Sigmoid colon (tissue), 7 donors: ENCODE measurements at regions of chr16 and their contacts with region 1.

Region 1: DNA sequence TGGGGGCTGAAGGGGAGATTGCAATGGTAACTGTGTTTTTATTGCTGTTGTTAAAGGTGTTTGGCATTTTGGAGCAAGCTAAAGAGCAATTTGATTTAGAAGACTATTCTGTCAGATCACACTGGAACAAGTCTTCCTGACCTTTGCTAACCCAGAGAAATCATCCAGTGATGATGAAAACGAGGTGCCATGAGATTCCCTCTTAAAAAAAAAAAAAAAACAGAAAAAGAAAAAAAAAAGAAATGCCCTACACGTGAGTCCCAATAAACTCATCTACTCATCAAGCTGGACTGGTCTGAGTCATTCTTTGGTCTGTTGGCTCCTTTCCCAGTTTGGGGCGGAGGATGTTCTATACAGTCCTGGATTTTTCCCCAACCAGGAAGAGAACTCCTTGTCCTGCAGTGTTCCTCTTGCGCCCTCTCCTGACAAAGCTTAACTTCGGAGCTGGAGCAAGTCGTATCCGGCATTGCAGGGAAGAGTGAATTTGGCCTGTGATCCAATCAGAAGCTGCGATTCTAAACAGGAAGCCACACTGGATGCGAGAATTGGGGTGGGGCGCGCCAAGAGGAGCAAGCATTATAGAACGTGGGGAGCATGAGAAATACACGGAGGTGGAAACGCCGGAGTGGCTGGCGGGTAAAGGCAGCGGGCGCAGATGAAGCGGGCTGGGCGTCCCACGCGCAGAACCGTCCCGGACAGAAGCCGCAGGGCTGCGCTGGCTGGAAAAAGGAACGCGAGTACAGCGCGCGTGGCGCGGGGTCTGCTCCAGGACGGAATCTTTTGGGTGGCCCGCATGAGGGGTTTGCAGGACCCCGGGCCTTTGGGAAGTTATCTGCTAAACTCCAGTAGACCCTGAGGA is 22.4 kb upstream of the CRYM start:
- DNase-seq: peak; percentile 98
- H3K4me3 ChIP-seq: peak overlapping the region; percentile 50 to 67 (median 63)
- H3K27ac ChIP-seq: peak overlapping the region; percentile 81 to 89 (median 86)
- H3K4me1 ChIP-seq: peaks cover 0 to 20% (median 11%) of the 10 kb centered on the region in 4 donors
- H3K27me3 ChIP-seq: no peaks in the 10 kb centered on the region
- CTCF ChIP-seq: peak; percentile 64 to 91 (median 82)
- EP300 ChIP-seq: peak in 1 of 4 donors; percentile 34
- POLR2A ChIP-seq: no peak

Region 2: DNA sequence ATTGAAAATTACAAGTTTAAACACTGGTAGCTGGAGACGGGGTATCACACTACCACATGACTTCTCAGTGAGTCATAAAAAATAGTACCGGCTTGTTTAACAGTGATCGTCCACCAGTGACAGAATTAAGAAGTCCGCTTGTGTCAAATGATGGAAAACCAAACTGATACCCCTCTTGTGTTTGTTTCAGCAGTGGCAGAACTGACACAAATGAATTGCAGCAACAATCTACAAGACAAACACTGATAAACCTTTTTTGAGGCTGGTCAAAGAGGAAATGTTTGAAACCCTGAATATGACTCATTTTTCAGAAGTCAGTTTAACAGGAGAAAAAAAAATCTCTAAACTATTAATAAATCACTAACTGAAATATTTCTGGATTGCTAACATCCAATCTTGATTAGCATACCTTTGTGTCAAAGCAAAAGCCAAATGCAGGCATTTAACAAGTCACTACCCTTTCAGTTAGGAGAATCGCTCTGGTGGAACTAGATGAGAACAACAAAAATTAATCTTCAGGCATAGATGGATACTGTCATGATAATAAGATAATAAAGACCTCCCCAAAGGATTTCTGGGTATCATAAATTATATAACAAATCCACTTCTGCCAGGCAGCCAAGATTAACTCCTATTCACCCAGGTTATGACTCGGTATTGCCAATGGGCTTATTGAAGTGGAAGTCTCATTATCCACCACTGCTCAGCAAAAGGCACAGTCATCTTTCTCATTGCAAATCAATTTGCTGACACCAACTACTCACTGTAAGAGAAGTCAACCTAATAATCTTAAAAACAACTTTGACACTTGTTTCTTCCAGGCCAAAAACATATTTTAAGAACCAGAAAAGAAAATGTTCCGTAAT is 421.1 kb before region 1 on chr16:
- intact Hi-C with region 1: no loop called
- DNase-seq: no peak
- H3K4me3 ChIP-seq: no peak overlapping the region
- H3K27ac ChIP-seq: peak overlapping the region; percentile 62 to 72 (median 64)
- H3K4me1 ChIP-seq: peaks cover 0 to 82% (median 69%) of the 10 kb centered on the region in 4 donors
- H3K27me3 ChIP-seq: no peaks in the 10 kb centered on the region
- CTCF ChIP-seq: no peak
- EP300 ChIP-seq: no peak
- POLR2A ChIP-seq: no peak

Region 3: GRCh38 chr16:21158208-21159110 is 142.1 kb before region 1 on chr16 and contains the start of gene LDAF1:
- intact Hi-C with region 1: loop called (anchors 1 kb)
- DNase-seq: peak; percentile 93
- H3K4me3 ChIP-seq: peak within 1 kb of the TSS; percentile 56 to 79 (median 59)
- H3K27ac ChIP-seq: peak within 1 kb of the TSS; percentile 85 to 93 (median 89)
- H3K4me1 ChIP-seq: peaks cover 0 to 54% (median 52%) of the 10 kb centered on the region in 4 donors
- H3K27me3 ChIP-seq: no peaks in the 10 kb centered on the region
- CTCF ChIP-seq: no peak
- EP300 ChIP-seq: no peak
- POLR2A ChIP-seq: peak; percentile 61
- total RNA-seq, gene LDAF1: 111 to 158 (median 123) TPM

Region 4: GRCh38 chr16:21190599-21190998 is 109.9 kb before region 1 on chr16:
- intact Hi-C with region 1: loop called (anchors 2 kb)
- DNase-seq: no peak
- H3K4me3 ChIP-seq: no peak overlapping the region
- H3K27ac ChIP-seq: no peak overlapping the region
- H3K4me1 ChIP-seq: peaks cover 0 to 5% (median 4%) of the 10 kb centered on the region in 4 donors
- H3K27me3 ChIP-seq: peaks cover 0 to under 1% (median 0%) of the 10 kb centered on the region in 3 donors
- CTCF ChIP-seq: no peak
- EP300 ChIP-seq: no peak
- POLR2A ChIP-seq: no peak

Region 5: DNA sequence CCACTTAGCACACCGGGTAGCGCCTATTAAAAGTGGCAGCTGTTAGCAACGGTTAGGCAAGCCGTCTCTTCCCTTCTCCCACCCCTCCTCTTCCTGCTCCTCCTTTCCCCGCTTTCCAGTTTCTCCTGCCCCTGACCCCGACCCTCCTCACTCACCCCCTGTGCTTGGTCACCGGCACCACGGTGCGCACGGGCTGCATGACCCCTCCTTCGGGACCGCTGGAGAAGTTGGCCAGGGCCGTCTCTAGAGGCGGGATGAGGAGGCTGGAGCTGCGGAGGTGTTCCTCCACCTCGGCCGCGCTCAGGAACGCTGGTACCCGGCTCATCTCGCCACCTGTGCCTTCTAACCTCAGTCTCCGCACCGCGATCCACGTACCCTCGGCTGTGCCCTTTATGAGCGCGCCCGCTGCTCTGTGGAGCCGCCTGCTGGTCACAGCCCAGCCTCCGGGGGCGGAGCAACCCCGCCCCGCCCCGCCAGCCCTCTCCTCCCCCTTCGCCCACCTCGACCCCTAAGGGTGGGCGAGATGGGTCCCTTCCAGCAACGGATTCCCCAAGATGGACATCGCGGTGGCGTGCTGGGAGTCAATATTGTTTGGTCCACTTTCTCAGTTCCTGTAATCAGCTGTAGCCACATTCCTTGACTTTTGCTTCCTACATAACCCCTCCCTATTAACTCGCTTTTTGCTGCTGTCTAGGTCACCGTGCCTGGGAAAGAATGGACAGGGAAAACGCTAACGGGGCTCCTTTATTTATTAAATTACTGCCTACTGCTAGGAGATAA is 22.4 kb before region 1 on chr16 and contains the start of gene CRYM:
- intact Hi-C with region 1: loop called (anchors 2 kb)
- DNase-seq: peak; percentile 79
- H3K4me3 ChIP-seq: peak within 1 kb of the TSS; percentile 19 to 53 (median 44)
- H3K27ac ChIP-seq: peak within 1 kb of the TSS in 3 of 4 donors; percentile 36 to 50 (median 36)
- H3K4me1 ChIP-seq: peaks cover 0 to 11% (median 8%) of the 10 kb centered on the region in 4 donors
- H3K27me3 ChIP-seq: peaks cover 0 to 25% (median 0%) of the 10 kb centered on the region in 3 donors
- CTCF ChIP-seq: peak; percentile 52 to 96 (median 70)
- EP300 ChIP-seq: no peak
- POLR2A ChIP-seq: no peak
- total RNA-seq, gene CRYM: 1.6 to 6.1 (median 4.6) TPM

Region 6: GRCh38 chr16:21338537-21339268 is 38.2 kb after region 1 on chr16:
- intact Hi-C with region 1: no loop called
- DNase-seq: no peak
- H3K4me3 ChIP-seq: no peak overlapping the region
- H3K27ac ChIP-seq: no peak overlapping the region
- H3K4me1 ChIP-seq: no peaks in the 10 kb centered on the region
- H3K27me3 ChIP-seq: no peaks in the 10 kb centered on the region
- CTCF ChIP-seq: no peak
- EP300 ChIP-seq: no peak
- POLR2A ChIP-seq: no peak

Region 7: DNA sequence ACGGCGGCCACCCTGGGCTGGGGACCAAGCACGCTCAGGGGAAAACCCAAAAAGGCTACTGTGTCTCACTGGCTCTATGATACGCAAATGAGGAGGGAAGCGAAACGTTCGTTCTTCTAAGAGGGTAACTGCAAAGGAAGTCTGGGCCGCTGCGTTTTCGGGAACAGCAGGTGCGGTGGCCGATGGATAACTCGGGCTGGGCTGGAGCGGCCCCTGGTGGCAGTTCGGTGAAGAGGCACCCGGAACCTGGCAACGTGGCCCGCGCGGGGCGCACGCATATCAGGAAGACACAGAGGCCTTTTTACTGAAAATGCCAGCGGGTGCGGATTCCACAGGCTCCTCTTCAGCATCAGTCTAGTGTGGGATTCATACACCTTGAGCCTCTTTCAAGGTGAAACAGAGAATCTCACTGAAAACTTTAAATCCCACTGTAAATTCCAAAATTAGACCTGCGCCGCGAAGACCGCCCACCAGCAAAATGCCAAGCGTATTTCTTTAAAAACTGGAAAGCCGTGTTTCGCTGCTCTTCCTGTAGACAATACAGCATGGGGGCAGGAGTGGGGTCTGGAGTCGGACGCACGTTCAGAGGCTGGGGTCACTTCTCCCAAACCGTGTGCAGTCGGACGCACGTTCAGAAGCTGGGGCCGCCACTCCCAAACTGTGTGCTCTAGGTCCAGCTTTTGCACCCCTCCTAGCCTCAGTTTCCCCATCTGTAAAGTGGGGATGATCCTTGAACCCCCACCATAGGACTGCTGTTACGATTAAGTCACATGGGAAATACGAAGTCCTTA is 254.5 kb after region 1 on chr16:
- intact Hi-C with region 1: loop called (anchors 10 kb)
- DNase-seq: peak; percentile 95
- H3K4me3 ChIP-seq: peak overlapping the region in 1 of 4 donors; percentile 21
- H3K27ac ChIP-seq: no peak overlapping the region
- H3K4me1 ChIP-seq: peaks cover 0 to 12% (median 10%) of the 10 kb centered on the region in 4 donors
- H3K27me3 ChIP-seq: peaks cover 0 to 9% (median 0%) of the 10 kb centered on the region in 3 donors
- CTCF ChIP-seq: peak; percentile 98 to 100 (median 99)
- EP300 ChIP-seq: no peak
- POLR2A ChIP-seq: no peak

Region 8: GRCh38 chr16:22665048-22665797 is 1364.7 kb after region 1 on chr16:
- intact Hi-C with region 1: loop called (anchors 5 kb)
- DNase-seq: no peak
- H3K4me3 ChIP-seq: no peak overlapping the region
- H3K27ac ChIP-seq: peak overlapping the region in 2 of 4 donors; percentile 56 to 60
- H3K4me1 ChIP-seq: peaks cover 0 to 28% (median 13%) of the 10 kb centered on the region in 4 donors
- H3K27me3 ChIP-seq: no peaks in the 10 kb centered on the region
- CTCF ChIP-seq: no peak
- EP300 ChIP-seq: peak in 2 of 4 donors; percentile 51 to 78
- POLR2A ChIP-seq: no peak